HEK293 (cell line): ENCODE measurements at regions of chr15 and their contacts with region 1.

Region 1: DNA sequence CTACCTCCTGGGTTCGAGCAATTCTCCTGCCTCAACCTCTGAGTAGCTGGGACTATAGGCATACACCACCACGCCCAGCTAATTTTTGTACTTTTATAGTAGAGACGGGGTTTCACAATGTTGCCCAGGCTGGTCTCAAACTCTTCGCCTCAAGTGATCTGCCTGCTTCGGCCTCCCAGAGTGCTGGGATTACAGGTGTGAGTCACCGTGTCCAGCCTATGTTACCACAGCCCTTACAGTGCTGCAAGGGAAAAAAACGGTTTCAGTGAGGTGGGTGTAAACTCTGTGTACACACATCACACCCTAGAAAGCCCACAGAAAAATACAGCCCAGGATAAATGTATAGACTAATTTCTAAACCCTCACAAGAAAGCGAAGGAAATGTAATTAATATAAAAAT is 103.5 kb upstream of the AKAP13 start:
- H3K4me3 ChIP-seq: no peak overlapping the region
- H3K27ac ChIP-seq: no peak overlapping the region
- H3K4me1 ChIP-seq: no peaks in the 10 kb centered on the region
- CTCF ChIP-seq: no peak

Region 2: GRCh38 chr15:85010386-85011159 is 266.3 kb before region 1 on chr15:
- CTCF ChIA-PET with region 1: no interaction called
- POLR2A ChIA-PET with region 1: no interaction called
- H3K4me3 ChIP-seq: no peak overlapping the region
- H3K27ac ChIP-seq: no peak overlapping the region
- H3K4me1 ChIP-seq: peaks cover 39% of the 10 kb centered on the region
- CTCF ChIP-seq: no peak

Region 3: GRCh38 chr15:85289677-85290365 is 12.9 kb after region 1 on chr15:
- CTCF ChIA-PET with region 1: interaction called, 21 read pairs
- POLR2A ChIA-PET with region 1: no interaction called
- H3K4me3 ChIP-seq: no peak overlapping the region
- H3K27ac ChIP-seq: no peak overlapping the region
- H3K4me1 ChIP-seq: no peaks in the 10 kb centered on the region
- CTCF ChIP-seq: peak; percentile 40; the same call in 1 of the 2 replicates